Activated T-helper 1 cell treated with anti-CD3 and anti-CD28 coated beads, Interleukin-12 subunit alpha, Interleukin-12 subunit beta, Interleukin-2, Interleukin-4 antibody, amounts not matched to agents 30 ng/mL and 10 ng/mL and 1 ng/mL, durations not matched to agents 14 hours and 24 hours and 36 hours (primary cell): ENCODE measurements at regions of chr3 and their contacts with region 1.

Region 1: DNA sequence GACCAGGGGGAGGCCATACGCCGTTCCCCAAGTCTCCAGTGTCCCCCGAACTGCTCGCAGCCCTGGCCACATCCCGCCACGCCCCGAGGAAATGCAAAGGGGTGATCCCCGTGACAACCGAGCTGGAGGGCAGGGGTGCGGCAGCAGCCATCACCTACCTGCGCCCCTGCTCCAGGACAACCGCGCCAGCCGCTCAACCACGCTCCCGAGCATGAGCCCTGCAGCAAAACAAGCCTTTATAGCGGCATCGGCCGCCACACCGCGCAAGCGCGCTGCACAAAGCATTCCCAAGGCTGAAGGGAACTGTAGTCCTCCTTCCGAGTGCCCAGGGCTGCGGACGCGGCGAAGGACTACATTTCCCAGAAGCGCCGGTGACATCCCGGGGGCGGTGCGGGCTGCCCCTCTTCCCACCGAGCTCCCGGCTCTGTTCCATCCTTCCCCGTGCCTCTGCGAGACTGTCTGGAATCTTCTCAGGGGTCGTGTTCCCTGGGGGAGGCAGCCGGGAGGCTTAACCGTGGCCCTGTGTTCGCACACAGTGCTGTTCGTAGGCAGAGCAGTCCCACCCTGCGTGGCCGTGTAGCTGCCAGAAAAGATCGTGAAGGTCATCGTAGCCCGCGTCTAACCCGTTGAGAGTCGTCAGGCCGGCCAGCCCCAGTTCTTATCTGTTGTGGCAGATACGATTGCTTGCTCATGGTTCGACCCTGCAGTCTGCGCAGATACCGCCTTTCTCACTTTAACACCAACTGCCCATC is at the start of gene ABCC5:
- DNase-seq: peak; percentile 78
- H3K4me3 Mint-ChIP-seq: peak within 1 kb of the TSS; percentile 99
- H3K27ac Mint-ChIP-seq: peak within 1 kb of the TSS; percentile 85
- H3K4me1 Mint-ChIP-seq: peaks cover 30% of the 10 kb centered on the region
- H3K27me3 Mint-ChIP-seq: peaks cover 23% of the 10 kb centered on the region
- total RNA-seq, gene ABCC5: 18.0 and 18.7 TPM in 2 replicates

Region 2: DNA sequence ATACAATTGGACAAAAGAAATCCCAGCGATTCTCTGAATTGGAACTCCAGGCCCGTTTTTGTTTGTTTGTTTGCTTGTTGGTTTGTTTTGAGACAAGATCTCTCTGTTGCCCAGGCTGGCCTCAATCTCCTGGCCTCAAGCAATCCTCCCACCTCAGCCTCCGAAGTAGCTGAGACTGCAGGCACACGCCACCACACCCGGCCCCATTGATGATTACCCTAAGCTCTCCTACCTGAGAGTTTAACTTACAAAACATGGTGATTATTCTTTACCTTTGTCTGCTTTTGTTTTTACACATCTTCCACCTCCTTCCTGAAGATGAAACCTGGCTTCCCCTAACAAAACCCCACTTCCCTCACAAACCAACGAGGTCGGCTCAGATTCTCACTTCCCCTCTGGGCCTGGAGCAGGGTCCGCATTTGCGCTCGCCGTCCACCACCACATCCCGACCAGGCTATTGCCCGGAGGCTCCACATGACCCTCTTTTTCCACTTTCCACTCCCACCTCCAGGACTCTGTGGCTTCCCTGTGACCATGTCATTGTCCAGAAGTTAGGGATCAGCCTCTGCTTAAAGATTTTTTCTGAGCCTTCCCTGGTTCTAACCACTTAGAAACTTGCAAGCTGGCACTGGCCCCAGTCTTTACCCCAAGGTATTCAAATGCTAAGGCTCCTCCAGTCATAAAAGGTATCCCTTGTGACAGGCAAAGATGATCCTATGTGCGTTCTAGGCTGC is 477.2 kb before region 1 on chr3:
- intact Hi-C with region 1: no loop called
- DNase-seq: no peak
- H3K4me3 Mint-ChIP-seq: peak overlapping the region; percentile 35
- H3K27ac Mint-ChIP-seq: peak overlapping the region; percentile 84
- H3K4me1 Mint-ChIP-seq: peaks cover 78% of the 10 kb centered on the region
- H3K27me3 Mint-ChIP-seq: no peaks in the 10 kb centered on the region

Region 3: DNA sequence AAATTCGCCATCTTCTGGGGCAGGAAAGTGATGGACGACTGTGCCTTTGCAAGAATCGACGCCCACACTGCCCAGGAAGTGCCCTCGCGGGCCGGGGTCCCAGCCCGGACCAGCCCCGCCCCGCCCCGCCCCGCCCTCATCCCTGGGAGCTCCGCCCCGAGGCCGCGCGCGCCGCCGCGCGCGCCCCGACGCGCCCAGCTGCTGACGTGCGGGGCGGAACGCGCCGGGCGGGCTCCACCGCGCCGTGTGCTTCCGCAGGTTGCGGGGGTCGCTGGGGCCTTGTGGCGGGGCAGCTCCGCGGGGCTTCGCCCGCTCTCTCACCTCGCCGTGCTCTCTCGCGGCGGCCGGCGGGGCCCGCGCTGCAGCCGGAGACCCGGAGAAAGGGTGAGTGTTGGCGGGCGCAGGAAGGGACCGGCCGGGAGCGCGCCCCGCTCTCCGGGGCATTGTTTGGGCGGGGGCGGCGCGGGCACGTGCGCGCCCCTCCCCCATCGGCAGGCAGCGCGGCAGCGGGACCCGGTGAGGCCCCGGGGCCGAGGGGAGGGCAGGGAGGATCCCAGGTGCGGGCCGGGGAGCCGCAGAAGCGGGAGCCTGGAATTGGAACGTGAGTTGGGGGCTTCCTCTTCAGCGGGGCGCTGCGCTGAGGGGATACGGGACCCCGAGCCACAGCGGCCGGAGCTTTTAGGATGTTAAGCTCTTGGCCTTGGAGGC is 320.1 kb before region 1 on chr3 and contains the start of gene YEATS2:
- intact Hi-C with region 1: loop called (anchors 5 kb)
- DNase-seq: peak; percentile 65
- H3K4me3 Mint-ChIP-seq: peak within 1 kb of the TSS; percentile 88
- H3K27ac Mint-ChIP-seq: peak within 1 kb of the TSS; percentile 94
- H3K4me1 Mint-ChIP-seq: peaks cover 37% of the 10 kb centered on the region
- H3K27me3 Mint-ChIP-seq: no peaks in the 10 kb centered on the region
- total RNA-seq, gene YEATS2: 54.2 and 57.4 TPM in 2 replicates

Region 4: GRCh38 chr3:184135149-184135910 is 117.5 kb after region 1 on chr3 and contains the start of gene EIF2B5:
- intact Hi-C with region 1: loop called (anchors 1 kb)
- DNase-seq: peak; percentile 83
- H3K4me3 Mint-ChIP-seq: peak within 1 kb of the TSS; percentile 92
- H3K27ac Mint-ChIP-seq: peak within 1 kb of the TSS; percentile 85
- H3K4me1 Mint-ChIP-seq: peaks cover 31% of the 10 kb centered on the region
- H3K27me3 Mint-ChIP-seq: no peaks in the 10 kb centered on the region
- total RNA-seq, gene EIF2B5: 75.6 and 75.9 TPM in 2 replicates

Region 5: DNA sequence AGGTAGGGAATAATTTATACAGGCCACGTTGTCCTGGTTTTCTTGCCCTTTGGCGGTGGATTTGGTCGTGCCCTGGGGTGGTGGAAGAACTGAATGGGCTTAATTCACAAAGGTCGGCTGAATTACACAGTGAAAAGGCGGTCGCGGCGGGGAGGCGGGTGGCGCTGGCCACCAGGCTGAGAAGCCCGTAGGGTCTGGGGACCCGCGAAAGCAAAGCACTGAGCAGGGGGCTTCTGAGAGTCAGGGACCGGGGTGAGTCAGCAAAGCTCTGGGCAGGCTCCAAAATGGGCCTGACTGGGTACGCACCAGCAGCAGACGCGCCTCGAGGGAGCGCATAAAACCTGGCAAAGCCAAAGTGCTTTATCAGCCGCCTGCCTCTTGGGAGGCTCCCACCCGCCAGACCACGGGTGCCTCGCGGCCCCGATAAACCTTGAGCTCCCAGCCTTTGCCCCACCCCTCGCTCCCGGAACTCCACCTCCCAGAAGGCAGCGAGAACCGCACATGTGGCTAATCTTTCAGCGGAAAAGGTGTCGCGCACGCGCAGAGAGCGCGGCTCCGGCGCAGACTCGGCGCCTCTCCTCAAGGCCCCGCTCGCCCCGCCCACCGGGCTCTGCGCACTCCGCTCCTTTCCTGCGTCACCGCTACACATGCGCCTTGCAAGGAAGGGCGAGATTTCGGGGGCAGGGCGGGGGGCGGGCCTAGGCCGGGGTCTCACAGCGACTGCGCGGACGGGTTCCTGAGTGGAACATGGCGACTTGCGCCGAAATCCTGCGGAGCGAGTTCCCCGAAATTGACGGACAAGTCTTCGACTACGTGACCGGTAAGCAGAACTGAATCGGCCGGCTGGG is 167.8 kb after region 1 on chr3 and contains the start of gene ABCF3:
- intact Hi-C with region 1: loop called (anchors 1 kb)
- DNase-seq: peak; percentile 99
- H3K4me3 Mint-ChIP-seq: peak within 1 kb of the TSS; percentile 98
- H3K27ac Mint-ChIP-seq: peak within 1 kb of the TSS; percentile 89
- H3K4me1 Mint-ChIP-seq: peaks cover 25% of the 10 kb centered on the region
- H3K27me3 Mint-ChIP-seq: no peaks in the 10 kb centered on the region
- total RNA-seq, gene ABCF3: 75.2 and 76.4 TPM in 2 replicates

Region 6: GRCh38 chr3:184811999-184812661 is 794.3 kb after region 1 on chr3 and contains the start of gene VPS8:
- intact Hi-C with region 1: loop called (anchors 2 kb)
- DNase-seq: peak; percentile 96
- H3K4me3 Mint-ChIP-seq: peak within 1 kb of the TSS; percentile 94
- H3K27ac Mint-ChIP-seq: peak within 1 kb of the TSS; percentile 95
- H3K4me1 Mint-ChIP-seq: peaks cover 74% of the 10 kb centered on the region
- H3K27me3 Mint-ChIP-seq: peaks cover 4% of the 10 kb centered on the region
- total RNA-seq, gene VPS8: 37.8 and 40.3 TPM in 2 replicates

Region 7: GRCh38 chr3:185282696-185283394 is 1265.0 kb after region 1 on chr3:
- intact Hi-C with region 1: loop called (anchors 5 kb)
- DNase-seq: peak; percentile 91
- H3K4me3 Mint-ChIP-seq: peak overlapping the region; percentile 96
- H3K27ac Mint-ChIP-seq: peak overlapping the region; percentile 80
- H3K4me1 Mint-ChIP-seq: peaks cover 19% of the 10 kb centered on the region
- H3K27me3 Mint-ChIP-seq: peaks cover 3% of the 10 kb centered on the region